ENCODE measurements at regions of chr20 and their contacts with region 1.

Region 1: DNA sequence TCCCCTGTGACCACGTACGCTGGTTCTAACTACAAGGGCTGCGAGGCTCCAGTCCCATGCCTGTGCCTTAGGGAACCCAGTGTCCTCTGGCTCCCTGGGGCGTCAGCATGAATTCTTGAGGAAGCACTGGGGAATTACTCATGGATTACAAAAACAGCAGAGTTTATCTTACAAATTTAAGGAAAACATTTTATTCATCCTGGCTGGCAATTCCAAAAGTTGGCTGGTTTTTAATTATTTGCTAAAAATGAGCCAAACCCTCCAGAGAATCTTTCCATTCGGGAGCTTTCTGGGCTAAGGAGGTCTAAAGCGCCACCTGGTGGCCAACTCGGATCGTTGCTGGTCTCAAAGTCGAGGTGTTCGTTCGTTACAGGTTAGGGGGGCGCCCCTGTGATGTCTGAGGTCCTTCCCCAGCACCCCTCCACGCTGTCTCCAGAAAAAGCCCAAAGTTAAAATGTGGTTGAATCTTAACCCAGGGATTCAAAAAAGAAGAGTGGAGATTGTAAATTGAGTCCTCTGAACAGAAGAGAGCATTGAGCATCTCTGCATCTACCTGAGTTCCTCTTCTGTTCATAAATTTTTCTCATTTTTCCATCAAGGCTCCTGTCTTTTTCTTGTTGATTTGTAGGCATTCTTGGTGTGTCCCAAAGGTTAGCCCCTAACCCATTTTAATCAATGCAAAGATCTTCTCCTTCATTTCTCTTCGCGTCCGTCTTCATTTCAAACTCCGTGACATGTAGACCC is 99.4 kb downstream of the BFSP1 start:
- DNase-seq: peak; percentile 62

Region 2: GRCh38 chr20:16801919-16802911 is 629.6 kb before region 1 on chr20:
- in situ Hi-C with region 1: loop called (anchors 25 kb)
- DNase-seq: peak; percentile 78

Region 3: GRCh38 chr20:16975682-16976081 is 456.1 kb before region 1 on chr20:
- in situ Hi-C with region 1: no loop called
- DNase-seq: no peak

Region 4: GRCh38 chr20:17327185-17328148 is 104.3 kb before region 1 on chr20:
- in situ Hi-C with region 1: no loop called
- DNase-seq: no peak

Region 5: DNA sequence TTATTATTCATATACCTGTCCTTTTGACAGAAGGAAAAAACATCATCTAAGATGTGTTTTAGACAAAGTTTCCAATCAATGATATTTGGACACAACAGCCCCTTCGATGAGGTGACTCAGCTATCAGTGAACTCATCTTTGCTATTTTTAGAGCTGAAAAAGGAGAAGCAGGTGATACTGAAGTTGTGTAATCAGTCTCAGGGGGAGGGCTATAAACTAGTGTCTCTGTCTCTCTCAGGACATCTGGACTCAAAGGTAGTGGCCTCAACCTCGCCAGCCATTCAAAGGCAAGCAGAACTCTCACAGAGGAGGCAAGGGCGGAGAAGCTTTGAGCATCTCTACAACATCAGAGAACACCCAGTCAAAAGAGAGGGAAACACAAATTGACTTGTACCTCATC is 36.1 kb before region 1 on chr20:
- in situ Hi-C with region 1: no loop called
- DNase-seq: no peak

Region 6: DNA sequence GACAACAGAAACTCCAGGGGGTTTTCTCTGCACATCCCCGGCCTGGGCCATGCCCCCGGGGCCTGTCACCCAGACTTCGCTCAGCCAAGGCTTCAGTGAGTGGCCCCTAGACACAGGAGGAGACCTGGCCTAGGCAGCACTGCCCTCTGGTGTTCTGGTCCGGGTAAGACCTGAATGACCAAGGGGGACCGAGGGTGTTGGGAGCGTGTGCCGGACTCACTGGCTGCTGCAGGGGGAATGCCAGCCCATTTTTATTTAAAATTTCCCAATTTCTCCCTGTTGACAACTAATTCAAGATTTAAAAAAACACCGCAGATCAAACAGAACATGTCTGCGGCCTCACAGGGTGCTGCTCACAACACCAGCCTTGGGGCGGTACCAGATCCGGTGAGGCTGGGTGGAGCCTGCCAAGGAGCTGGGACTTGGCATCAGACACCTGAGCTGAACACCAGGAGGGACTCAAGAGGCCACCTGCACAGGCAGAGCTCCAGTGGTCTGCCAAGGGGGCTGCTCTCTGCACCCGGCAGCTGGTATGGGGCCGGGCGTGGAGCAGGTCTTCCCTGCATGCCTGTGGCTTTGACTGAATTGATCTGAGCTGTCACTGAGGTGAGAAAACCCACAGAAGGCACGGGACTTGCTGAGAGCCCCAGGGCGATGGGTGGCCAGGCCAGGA is 185.9 kb after region 1 on chr20:
- in situ Hi-C with region 1: no loop called
- DNase-seq: peak; percentile 67